Endothelial cell of umbilical vein (primary cell): ENCODE measurements at regions of chr1 and their contacts with region 1.

Region 1: GRCh38 chr1:64268653-64269557 is 65.5 kb downstream of the UBE2U start:
- DNase-seq: peak; percentile 76
- H3K4me3 ChIP-seq: no peak overlapping the region
- H3K27ac ChIP-seq: no peak overlapping the region
- H3K4me1 ChIP-seq: peaks cover under 1% of the 10 kb centered on the region
- H3K27me3 ChIP-seq: peaks cover 0 to 5% of the 10 kb centered on the region in 2 experiments
- CTCF ChIP-seq: peak; percentile 49 to 58
- POLR2A ChIP-seq: no peak

Region 2: DNA sequence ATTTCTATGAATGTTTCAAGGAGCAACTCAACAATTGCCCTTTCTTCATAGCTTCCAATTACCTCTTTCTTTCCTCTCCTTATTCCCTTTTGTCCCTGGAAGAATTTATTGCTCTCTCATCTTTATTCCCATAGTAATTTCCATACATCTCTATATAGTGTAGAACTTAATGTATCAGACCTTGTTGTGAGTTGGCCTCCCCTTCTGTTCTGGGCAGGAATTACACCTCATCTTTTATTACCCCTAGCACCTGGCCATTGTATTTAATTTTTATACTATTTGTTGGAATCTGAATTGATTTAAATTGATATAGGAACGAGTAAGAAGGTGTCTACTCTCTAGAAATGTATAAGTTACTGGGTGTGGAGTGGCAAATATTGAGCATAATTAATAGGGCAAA is 315.6 kb after region 1 on chr1:
- CTCF ChIA-PET with region 1: interaction called, 5 read pairs
- POLR2A ChIA-PET with region 1: no interaction called
- dilution Hi-C with region 1: no loop called
- intact Hi-C with region 1: loop called (anchors 1 kb)
- DNase-seq: peak; percentile 26
- H3K4me3 ChIP-seq: no peak overlapping the region
- H3K27ac ChIP-seq: no peak overlapping the region
- H3K4me1 ChIP-seq: no peaks in the 10 kb centered on the region
- H3K27me3 ChIP-seq: no peaks in the 10 kb centered on the region
- CTCF ChIP-seq: peak in 1 of 2 donors; percentile 26
- POLR2A ChIP-seq: no peak

Region 3: GRCh38 chr1:64675718-64676345 is 406.9 kb after region 1 on chr1:
- CTCF ChIA-PET with region 1: interaction called, 52 read pairs
- POLR2A ChIA-PET with region 1: no interaction called
- dilution Hi-C with region 1: no loop called
- intact Hi-C with region 1: loop called (anchors 1 kb)
- DNase-seq: peak; percentile 32
- H3K4me3 ChIP-seq: no peak overlapping the region
- H3K27ac ChIP-seq: no peak overlapping the region
- H3K4me1 ChIP-seq: no peaks in the 10 kb centered on the region
- H3K27me3 ChIP-seq: no peaks in the 10 kb centered on the region
- CTCF ChIP-seq: peak; percentile 35 to 67
- POLR2A ChIP-seq: no peak

Region 4: GRCh38 chr1:64766385-64766784 is 497.5 kb after region 1 on chr1:
- CTCF ChIA-PET with region 1: no interaction called
- POLR2A ChIA-PET with region 1: no interaction called
- dilution Hi-C with region 1: no loop called
- intact Hi-C with region 1: no loop called
- DNase-seq: no peak
- H3K4me3 ChIP-seq: no peak overlapping the region
- H3K27ac ChIP-seq: no peak overlapping the region
- H3K4me1 ChIP-seq: no peaks in the 10 kb centered on the region
- H3K27me3 ChIP-seq: no peaks in the 10 kb centered on the region
- CTCF ChIP-seq: no peak
- POLR2A ChIP-seq: no peak

Region 5: GRCh38 chr1:64823691-64824476 is 555.0 kb after region 1 on chr1:
- CTCF ChIA-PET with region 1: interaction called, 61 read pairs
- POLR2A ChIA-PET with region 1: no interaction called
- dilution Hi-C with region 1: no loop called
- intact Hi-C with region 1: loop called (anchors 1 kb)
- DNase-seq: peak; percentile 81
- H3K4me3 ChIP-seq: no peak overlapping the region
- H3K27ac ChIP-seq: no peak overlapping the region
- H3K4me1 ChIP-seq: peaks cover 2% of the 10 kb centered on the region
- H3K27me3 ChIP-seq: no peaks in the 10 kb centered on the region
- CTCF ChIP-seq: peak; percentile 61 to 69
- POLR2A ChIP-seq: no peak